Activated CD8-positive, alpha-beta memory T cell treated with anti-CD3 and anti-CD28 coated beads, Interleukin-2, amount 10 ng/mL, durations not matched to agents 7 days and 5 days (primary cell): ENCODE measurements at regions of chr1 and their contacts with region 1.

Region 1: DNA sequence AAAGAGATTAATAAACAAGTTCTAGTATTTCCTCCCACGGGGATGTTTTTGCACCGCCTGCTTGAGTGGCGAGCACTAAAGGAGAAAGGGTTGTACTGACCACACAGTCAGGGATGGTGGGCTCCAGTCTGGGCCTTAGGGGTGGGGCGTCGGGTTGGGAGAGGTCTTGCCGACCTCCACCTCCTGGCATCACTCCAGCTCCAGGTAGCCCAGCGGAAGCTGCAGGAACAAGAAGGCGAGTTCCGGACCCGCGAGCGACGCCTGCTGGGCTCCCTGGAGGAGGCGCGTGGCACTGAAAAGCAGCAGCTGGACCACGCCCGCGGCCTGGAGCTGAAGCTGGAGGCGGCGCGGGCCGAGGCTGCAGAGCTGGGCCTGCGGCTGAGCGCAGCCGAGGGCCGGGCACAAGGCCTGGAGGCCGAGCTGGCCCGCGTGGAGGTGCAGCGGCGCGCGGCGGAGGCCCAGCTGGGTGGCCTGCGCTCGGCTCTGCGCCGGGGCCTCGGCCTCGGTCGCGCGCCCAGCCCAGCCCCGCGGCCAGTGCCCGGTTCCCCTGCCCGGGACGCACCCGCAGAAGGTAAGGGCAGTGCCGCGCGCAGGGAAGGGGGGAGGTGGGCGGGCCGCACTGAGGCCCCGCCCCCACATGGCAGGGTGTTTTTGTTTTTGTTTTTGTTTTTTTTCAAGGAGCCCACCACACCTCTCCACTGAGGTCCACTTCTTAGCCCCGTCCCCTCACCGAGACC is 19.7 kb downstream of the MFAP2 start:
- DNase-seq: peak; percentile 90
- ATAC-seq: peak; percentile 93
- H3K4me3 Mint-ChIP-seq: peak overlapping the region; percentile 73
- H3K27ac Mint-ChIP-seq: peak overlapping the region; percentile 66
- H3K4me1 Mint-ChIP-seq: peaks cover 13% of the 10 kb centered on the region
- H3K27me3 Mint-ChIP-seq: no peaks in the 10 kb centered on the region

Region 2: GRCh38 chr1:16625497-16626408 is 335.0 kb before region 1 on chr1:
- CTCF ChIA-PET with region 1: interaction called, 11 read pairs
- DNase-seq: no peak
- ATAC-seq: no peak
- H3K4me3 Mint-ChIP-seq: no peak overlapping the region
- H3K27ac Mint-ChIP-seq: no peak overlapping the region
- H3K4me1 Mint-ChIP-seq: peaks cover 6% of the 10 kb centered on the region
- H3K27me3 Mint-ChIP-seq: no peaks in the 10 kb centered on the region

Region 3: DNA sequence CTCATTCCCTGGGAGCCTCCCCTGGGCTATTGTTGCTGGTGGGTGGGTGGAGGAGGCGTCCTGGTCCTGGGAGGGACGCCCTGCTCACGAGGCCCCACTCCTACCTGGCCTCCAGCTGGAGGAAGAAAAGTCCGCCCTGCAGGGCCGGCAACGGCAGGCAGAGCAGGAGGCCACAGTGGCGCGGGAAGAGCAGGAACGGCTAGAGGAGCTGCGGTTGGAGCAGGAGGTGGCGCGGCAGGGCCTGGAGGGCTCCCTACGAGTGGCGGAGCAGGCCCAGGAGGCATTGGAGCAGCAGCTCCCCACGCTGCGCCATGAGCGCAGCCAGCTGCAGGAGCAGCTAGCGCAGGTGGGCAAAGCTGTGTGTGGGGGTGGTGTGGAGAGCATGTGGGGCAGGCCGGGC is 14.1 kb before region 1 on chr1:
- CTCF ChIA-PET with region 1: interaction called, 33 read pairs
- DNase-seq: no peak
- ATAC-seq: no peak
- H3K4me3 Mint-ChIP-seq: no peak overlapping the region
- H3K27ac Mint-ChIP-seq: no peak overlapping the region
- H3K4me1 Mint-ChIP-seq: no peaks in the 10 kb centered on the region
- H3K27me3 Mint-ChIP-seq: no peaks in the 10 kb centered on the region

Region 4: DNA sequence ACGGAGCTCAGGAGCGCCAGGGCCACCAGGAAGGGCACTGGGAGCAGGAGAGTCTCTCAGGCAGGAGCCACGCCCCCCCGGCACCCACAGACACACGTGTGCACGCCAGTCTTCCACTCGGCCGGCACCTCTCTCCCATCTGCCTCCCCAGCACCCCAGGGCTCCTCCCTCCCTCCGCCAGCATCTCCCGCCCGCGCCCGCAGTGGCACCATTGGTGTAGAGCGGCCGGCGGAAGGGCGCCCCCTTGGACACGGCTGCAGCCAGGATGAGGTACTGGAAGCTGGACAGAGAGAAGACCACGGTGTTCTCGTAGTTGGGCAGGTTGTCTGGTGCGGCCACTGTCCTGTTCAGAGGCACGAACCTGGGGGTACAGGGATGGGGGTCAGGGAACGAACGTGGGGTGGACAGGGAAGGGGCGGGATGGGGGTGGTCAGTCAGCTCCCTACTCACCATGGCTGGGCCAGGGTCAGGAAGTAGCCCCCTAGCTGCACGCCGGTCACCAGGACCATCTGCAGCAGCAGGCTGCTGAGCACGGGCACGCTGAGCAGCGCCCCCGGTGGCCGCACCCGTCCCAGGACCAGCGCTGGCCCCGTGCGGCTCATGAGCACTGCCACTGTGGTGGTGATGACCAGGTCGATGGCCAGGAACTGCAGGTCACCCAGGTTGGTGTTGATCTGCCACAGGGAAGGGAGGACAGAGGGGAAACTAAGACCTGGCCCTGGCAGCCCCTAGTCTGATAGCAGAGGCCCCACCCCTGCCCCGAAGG is 26.1 kb after region 1 on chr1:
- CTCF ChIA-PET with region 1: no interaction called
- DNase-seq: no peak
- ATAC-seq: no peak
- H3K4me3 Mint-ChIP-seq: no peak overlapping the region
- H3K27ac Mint-ChIP-seq: no peak overlapping the region
- H3K4me1 Mint-ChIP-seq: no peaks in the 10 kb centered on the region
- H3K27me3 Mint-ChIP-seq: peaks cover 13% of the 10 kb centered on the region

Region 5: DNA sequence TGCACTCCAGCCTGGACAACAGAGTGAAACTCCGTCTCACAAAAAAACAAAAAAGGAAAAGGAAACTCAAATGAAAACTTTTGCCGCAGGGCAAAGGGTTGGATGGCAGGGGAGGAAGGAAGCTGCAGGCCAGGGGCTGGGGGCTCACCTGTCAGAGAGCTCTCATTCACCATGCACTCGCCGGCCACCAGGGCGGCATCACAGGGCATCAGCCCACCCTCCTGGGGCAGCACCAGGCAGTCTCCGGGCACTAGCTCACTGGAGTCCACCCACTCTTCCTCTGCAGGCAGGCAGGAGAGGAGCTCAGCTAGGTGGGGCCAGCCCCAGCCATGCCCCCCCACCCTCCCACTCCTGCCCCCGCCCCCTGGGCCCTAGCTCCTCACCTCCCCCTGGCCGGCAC is 39.1 kb after region 1 on chr1:
- CTCF ChIA-PET with region 1: interaction called, 20 read pairs
- DNase-seq: no peak
- ATAC-seq: no peak
- H3K4me3 Mint-ChIP-seq: no peak overlapping the region
- H3K27ac Mint-ChIP-seq: no peak overlapping the region
- H3K4me1 Mint-ChIP-seq: no peaks in the 10 kb centered on the region
- H3K27me3 Mint-ChIP-seq: no peaks in the 10 kb centered on the region

Region 6: GRCh38 chr1:17045634-17046333 is 85.1 kb after region 1 on chr1:
- CTCF ChIA-PET with region 1: interaction called, 25 read pairs
- DNase-seq: no peak
- ATAC-seq: peak; percentile 33
- H3K4me3 Mint-ChIP-seq: no peak overlapping the region
- H3K27ac Mint-ChIP-seq: peak overlapping the region; percentile 1
- H3K4me1 Mint-ChIP-seq: peaks cover 16% of the 10 kb centered on the region
- H3K27me3 Mint-ChIP-seq: no peaks in the 10 kb centered on the region

Region 7: GRCh38 chr1:17119076-17119772 is 158.5 kb after region 1 on chr1 and contains the start of gene PADI2:
- CTCF ChIA-PET with region 1: no interaction called
- DNase-seq: peak; percentile 58
- ATAC-seq: peak; percentile 90
- H3K4me3 Mint-ChIP-seq: no peak within 1 kb of the TSS
- H3K27ac Mint-ChIP-seq: no peak within 1 kb of the TSS
- H3K4me1 Mint-ChIP-seq: no peaks in the 10 kb centered on the region
- H3K27me3 Mint-ChIP-seq: peaks cover 52% of the 10 kb centered on the region
- total RNA-seq, gene PADI2: 0.09 to 0.23 TPM

Region 8: GRCh38 chr1:17141441-17142197 is 180.9 kb after region 1 on chr1:
- CTCF ChIA-PET with region 1: no interaction called
- DNase-seq: no peak
- ATAC-seq: no peak
- H3K4me3 Mint-ChIP-seq: no peak overlapping the region
- H3K27ac Mint-ChIP-seq: no peak overlapping the region
- H3K4me1 Mint-ChIP-seq: no peaks in the 10 kb centered on the region
- H3K27me3 Mint-ChIP-seq: peaks cover 17% of the 10 kb centered on the region